Naive thymus-derived CD4-positive, alpha-beta T cell (primary cell): ENCODE measurements at regions of chr19 and their contacts with region 1.

Region 1: DNA sequence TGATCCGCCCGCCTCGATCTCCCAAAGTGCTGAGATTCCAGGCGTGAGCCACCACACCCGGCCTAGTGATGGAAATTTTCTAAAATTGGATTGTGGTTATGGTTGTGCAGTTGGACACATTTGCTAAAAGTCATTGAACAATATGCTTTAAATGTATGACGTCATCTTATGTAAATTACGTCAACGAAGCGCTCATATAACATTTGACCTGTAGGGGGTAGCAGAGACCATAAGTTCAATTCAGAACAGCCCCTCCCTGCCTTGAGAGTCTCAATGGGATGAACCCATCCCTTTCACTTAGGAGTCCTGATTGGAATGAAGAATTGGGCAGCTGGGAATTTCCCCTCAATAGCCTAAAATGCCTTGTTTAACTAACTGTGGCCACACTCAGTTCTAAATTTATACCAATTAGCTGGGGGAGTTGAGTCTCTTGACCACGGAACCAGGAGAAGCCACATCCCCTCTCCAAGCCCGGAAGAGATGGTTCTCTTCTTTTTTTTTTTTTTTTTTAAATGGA is 15.3 kb upstream of the TLE6 start:
- DNase-seq: peak in 8 of 9 donors; percentile 44 to 84 (median 74)
- ATAC-seq: peak; percentile 99
- H3K4me3 ChIP-seq: no peak overlapping the region
- H3K4me3 Mint-ChIP-seq: peak overlapping the region in 4 of 10 donors; percentile 1 to 46 (median 40)
- H3K27ac ChIP-seq: no peak overlapping the region
- H3K27ac Mint-ChIP-seq: peak overlapping the region in 7 of 9 donors; percentile 49 to 90 (median 82)
- H3K4me1 ChIP-seq: no peaks in the 10 kb centered on the region
- H3K4me1 Mint-ChIP-seq: peaks cover 0 to 6% (median 6%) of the 10 kb centered on the region in 7 donors
- H3K27me3 ChIP-seq: no peaks in the 10 kb centered on the region
- H3K27me3 Mint-ChIP-seq: peaks cover 0 to 5% (median 0%) of the 10 kb centered on the region in 5 donors

Region 2: GRCh38 chr19:2561895-2562294 is 400.2 kb before region 1 on chr19:
- CTCF ChIA-PET with region 1: no interaction called
- POLR2A ChIA-PET with region 1: no interaction called
- intact Hi-C with region 1: no loop called
- DNase-seq: peak; percentile 38 to 78 (median 71)
- ATAC-seq: peak; percentile 93
- H3K4me3 ChIP-seq: peak overlapping the region; percentile 70
- H3K4me3 Mint-ChIP-seq: peak overlapping the region; percentile 83 to 96 (median 92)
- H3K27ac ChIP-seq: peak overlapping the region; percentile 78
- H3K27ac Mint-ChIP-seq: peak overlapping the region; percentile 92 to 99 (median 98)
- H3K4me1 ChIP-seq: peaks cover 8 to 11% of the 10 kb centered on the region in 2 donors
- H3K4me1 Mint-ChIP-seq: peaks cover 12 to 56% (median 20%) of the 10 kb centered on the region in 7 donors
- H3K27me3 ChIP-seq: no peaks in the 10 kb centered on the region
- H3K27me3 Mint-ChIP-seq: no peaks in the 10 kb centered on the region

Region 3: DNA sequence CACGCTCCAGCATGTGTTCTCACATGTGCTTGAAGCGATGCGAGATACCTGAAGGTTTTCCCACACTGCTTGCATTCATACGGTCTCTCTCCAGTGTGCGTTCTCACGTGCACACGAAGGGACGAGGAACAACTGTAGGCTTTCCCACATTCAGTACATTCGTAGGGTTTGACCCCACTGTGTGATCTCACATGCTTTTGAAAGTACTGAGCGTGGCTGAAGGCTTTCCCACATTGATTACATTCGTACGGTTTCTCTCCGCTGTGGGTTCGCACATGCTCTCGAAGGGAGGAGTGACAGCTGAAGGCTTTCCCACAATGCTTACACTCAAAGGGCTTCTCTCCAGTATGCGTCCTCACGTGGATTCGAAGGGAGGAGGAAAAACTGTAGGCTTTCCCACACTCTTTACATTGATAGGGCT is 28.6 kb before region 1 on chr19:
- CTCF ChIA-PET with region 1: no interaction called
- POLR2A ChIA-PET with region 1: no interaction called
- intact Hi-C with region 1: no loop called
- DNase-seq: no peak
- ATAC-seq: no peak
- H3K4me3 ChIP-seq: no peak overlapping the region
- H3K4me3 Mint-ChIP-seq: no peak overlapping the region
- H3K27ac ChIP-seq: no peak overlapping the region
- H3K27ac Mint-ChIP-seq: peak overlapping the region in 2 of 9 donors; percentile 28 to 54
- H3K4me1 ChIP-seq: no peaks in the 10 kb centered on the region
- H3K4me1 Mint-ChIP-seq: no peaks in the 10 kb centered on the region
- H3K27me3 ChIP-seq: no peaks in the 10 kb centered on the region
- H3K27me3 Mint-ChIP-seq: no peaks in the 10 kb centered on the region

Region 4: DNA sequence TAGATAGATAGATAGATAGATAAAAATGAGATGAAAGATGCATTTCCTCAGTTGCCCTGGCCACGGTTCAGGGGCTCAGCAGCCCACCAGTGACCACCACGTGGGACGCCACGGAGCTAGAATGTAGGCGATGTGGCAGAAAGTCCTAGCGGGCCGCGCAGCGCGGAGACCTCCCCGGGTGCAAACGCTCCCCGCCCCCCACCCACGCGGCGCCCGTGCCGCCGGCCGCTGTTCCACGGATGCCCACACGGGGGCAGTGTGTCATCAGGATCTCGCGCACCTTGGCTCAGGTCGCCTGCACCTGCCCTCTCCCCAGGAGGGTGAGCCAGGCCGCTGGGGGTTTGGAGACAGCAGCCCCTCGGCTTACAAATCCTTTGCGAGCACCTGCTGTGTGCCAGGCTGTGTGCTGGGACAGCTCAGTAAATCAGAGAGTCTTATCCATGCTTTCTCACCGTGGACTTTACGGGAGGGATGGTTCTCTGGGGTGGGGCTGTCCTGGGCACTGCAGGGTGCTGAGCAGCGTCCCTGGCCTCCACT is 113.9 kb after region 1 on chr19:
- CTCF ChIA-PET with region 1: interaction called, 3 read pairs
- POLR2A ChIA-PET with region 1: interaction called, 3 read pairs
- intact Hi-C with region 1: loop called in 1 of 2 experiments (anchors 1 kb)
- DNase-seq: peak; percentile 63 to 85 (median 71)
- ATAC-seq: peak; percentile 99
- H3K4me3 ChIP-seq: no peak overlapping the region
- H3K4me3 Mint-ChIP-seq: peak overlapping the region in 4 of 10 donors; percentile 44 to 68 (median 50)
- H3K27ac ChIP-seq: no peak overlapping the region
- H3K27ac Mint-ChIP-seq: no peak overlapping the region
- H3K4me1 ChIP-seq: peaks cover 0 to 9% of the 10 kb centered on the region in 2 donors
- H3K4me1 Mint-ChIP-seq: peaks cover 0 to 10% (median 4%) of the 10 kb centered on the region in 7 donors
- H3K27me3 ChIP-seq: no peaks in the 10 kb centered on the region
- H3K27me3 Mint-ChIP-seq: peaks cover 0 to 6% (median 0%) of the 10 kb centered on the region in 5 donors

Region 5: DNA sequence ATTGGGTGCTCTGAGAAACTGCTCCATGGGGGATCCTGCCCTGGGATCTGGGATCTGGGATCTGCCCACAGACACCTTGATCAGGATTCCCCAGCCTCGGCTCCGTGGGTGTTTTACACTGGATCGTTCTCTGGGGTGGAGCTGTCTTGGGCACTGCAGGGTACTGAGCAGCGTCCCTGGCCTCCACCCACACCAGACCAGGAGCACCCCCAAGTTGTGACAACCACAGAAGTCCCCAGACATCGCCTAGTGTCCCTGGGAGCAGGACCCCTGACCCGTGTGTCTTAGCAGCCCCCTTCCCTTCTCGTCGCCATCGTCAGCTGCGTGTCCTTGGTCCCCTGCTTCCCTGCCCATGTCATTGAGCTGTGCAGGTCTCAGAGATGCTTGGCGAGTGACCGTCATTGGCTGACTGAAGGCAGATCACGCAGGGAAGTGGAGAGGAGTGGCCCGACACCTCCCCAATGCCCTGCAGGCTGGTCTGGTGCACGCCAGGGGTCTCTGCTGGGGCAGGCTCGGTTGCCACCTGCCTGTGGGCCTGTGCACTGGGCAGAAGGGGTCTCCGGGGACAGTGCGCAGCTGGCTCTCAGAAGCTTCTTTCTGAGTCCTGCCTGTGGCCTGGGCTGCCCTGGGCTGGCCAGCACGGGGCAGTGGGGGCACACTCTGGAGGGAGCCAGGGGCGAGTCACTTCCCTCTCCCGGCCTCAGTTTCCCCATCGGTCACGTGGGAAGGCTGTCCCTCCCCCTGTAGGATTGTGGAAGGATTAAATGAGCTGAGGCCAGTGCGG is 138.2 kb after region 1 on chr19:
- CTCF ChIA-PET with region 1: interaction called, 23 read pairs
- POLR2A ChIA-PET with region 1: interaction called, 5 read pairs
- intact Hi-C with region 1: loop called (anchors 1 kb)
- DNase-seq: no peak
- ATAC-seq: no peak
- H3K4me3 ChIP-seq: no peak overlapping the region
- H3K4me3 Mint-ChIP-seq: peak overlapping the region in 5 of 10 donors; percentile 17 to 97 (median 61)
- H3K27ac ChIP-seq: no peak overlapping the region
- H3K27ac Mint-ChIP-seq: no peak overlapping the region
- H3K4me1 ChIP-seq: peaks cover 18 to 45% of the 10 kb centered on the region in 2 donors
- H3K4me1 Mint-ChIP-seq: peaks cover 20 to 48% (median 30%) of the 10 kb centered on the region in 7 donors
- H3K27me3 ChIP-seq: no peaks in the 10 kb centered on the region
- H3K27me3 Mint-ChIP-seq: peaks cover 0 to 33% (median 5%) of the 10 kb centered on the region in 5 donors

Region 6: GRCh38 chr19:3108775-3109174 is 146.7 kb after region 1 on chr19:
- CTCF ChIA-PET with region 1: interaction called, 25 read pairs
- POLR2A ChIA-PET with region 1: interaction called, 5 read pairs
- intact Hi-C with region 1: loop called (anchors 1 kb)
- DNase-seq: peak in 8 of 9 donors; percentile 51 to 72 (median 65)
- ATAC-seq: peak; percentile 76
- H3K4me3 ChIP-seq: no peak overlapping the region
- H3K4me3 Mint-ChIP-seq: peak overlapping the region in 1 of 10 donors; percentile 46
- H3K27ac ChIP-seq: no peak overlapping the region
- H3K27ac Mint-ChIP-seq: peak overlapping the region in 5 of 9 donors; percentile 43 to 70 (median 57)
- H3K4me1 ChIP-seq: peaks cover 8% of the 10 kb centered on the region in 2 donors
- H3K4me1 Mint-ChIP-seq: peaks cover 4 to 15% (median 11%) of the 10 kb centered on the region in 7 donors
- H3K27me3 ChIP-seq: no peaks in the 10 kb centered on the region
- H3K27me3 Mint-ChIP-seq: peaks cover 0 to 2% (median 0%) of the 10 kb centered on the region in 5 donors

Region 7: DNA sequence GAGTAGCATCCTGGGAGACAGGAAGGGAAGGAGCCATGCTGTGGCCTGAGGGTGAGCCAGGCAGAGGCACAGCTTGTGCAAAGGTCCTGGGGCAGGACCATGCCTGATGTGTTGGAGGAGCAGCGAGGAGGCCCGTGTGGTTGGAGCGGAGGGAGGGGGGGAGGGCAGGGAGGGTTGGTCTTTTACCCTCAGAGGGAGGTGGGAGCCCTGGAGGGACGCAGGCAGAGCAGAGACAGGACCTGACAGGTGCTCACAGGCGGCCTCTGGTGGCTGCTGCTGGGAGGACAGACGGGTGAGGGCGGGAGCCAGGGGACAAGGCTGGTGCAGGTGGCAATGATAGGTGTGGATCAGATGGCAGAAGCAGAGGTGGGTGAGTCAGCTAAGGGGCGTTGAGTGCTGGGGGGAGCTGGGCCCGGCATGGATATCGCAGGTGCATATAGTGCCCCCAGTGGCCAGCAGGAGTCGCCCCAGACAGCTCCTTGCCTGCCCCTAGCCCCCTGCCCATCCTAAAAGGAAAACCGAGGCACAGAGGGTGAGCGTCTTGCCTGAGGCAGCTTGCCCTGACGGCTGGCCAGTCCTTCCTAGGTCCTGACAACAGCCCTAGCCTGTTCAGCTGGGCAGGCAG is 163.9 kb after region 1 on chr19:
- CTCF ChIA-PET with region 1: interaction called, 6 read pairs
- POLR2A ChIA-PET with region 1: no interaction called
- intact Hi-C with region 1: loop called in 1 of 2 experiments (anchors 1 kb)
- DNase-seq: peak in 8 of 9 donors; percentile 32 to 74 (median 64)
- ATAC-seq: peak; percentile 92
- H3K4me3 ChIP-seq: no peak overlapping the region
- H3K4me3 Mint-ChIP-seq: no peak overlapping the region
- H3K27ac ChIP-seq: no peak overlapping the region
- H3K27ac Mint-ChIP-seq: no peak overlapping the region
- H3K4me1 ChIP-seq: no peaks in the 10 kb centered on the region
- H3K4me1 Mint-ChIP-seq: peaks cover 0 to 21% (median 5%) of the 10 kb centered on the region in 7 donors
- H3K27me3 ChIP-seq: no peaks in the 10 kb centered on the region
- H3K27me3 Mint-ChIP-seq: peaks cover 0 to 6% (median 2%) of the 10 kb centered on the region in 5 donors

Region 8: GRCh38 chr19:3163230-3163886 is 201.3 kb after region 1 on chr19:
- CTCF ChIA-PET with region 1: interaction called, 5 read pairs
- POLR2A ChIA-PET with region 1: no interaction called
- intact Hi-C with region 1: loop called (anchors 1 to 2 kb)
- DNase-seq: peak in 8 of 9 donors; percentile 48 to 76 (median 62)
- ATAC-seq: peak; percentile 76
- H3K4me3 ChIP-seq: no peak overlapping the region
- H3K4me3 Mint-ChIP-seq: peak overlapping the region in 2 of 10 donors; percentile 35 to 38
- H3K27ac ChIP-seq: no peak overlapping the region
- H3K27ac Mint-ChIP-seq: peak overlapping the region in 6 of 9 donors; percentile 14 to 83 (median 56)
- H3K4me1 ChIP-seq: no peaks in the 10 kb centered on the region
- H3K4me1 Mint-ChIP-seq: peaks cover 12 to 48% (median 15%) of the 10 kb centered on the region in 7 donors
- H3K27me3 ChIP-seq: no peaks in the 10 kb centered on the region
- H3K27me3 Mint-ChIP-seq: no peaks in the 10 kb centered on the region

Region 9: GRCh38 chr19:3210347-3211017 is 248.4 kb after region 1 on chr19:
- CTCF ChIA-PET with region 1: interaction called, 3 read pairs
- POLR2A ChIA-PET with region 1: no interaction called
- intact Hi-C with region 1: loop called (anchors 1 kb)
- DNase-seq: peak; percentile 30 to 72 (median 58)
- ATAC-seq: peak; percentile 91
- H3K4me3 ChIP-seq: no peak overlapping the region
- H3K4me3 Mint-ChIP-seq: no peak overlapping the region
- H3K27ac ChIP-seq: no peak overlapping the region
- H3K27ac Mint-ChIP-seq: peak overlapping the region in 2 of 9 donors; percentile 25 to 55
- H3K4me1 ChIP-seq: no peaks in the 10 kb centered on the region
- H3K4me1 Mint-ChIP-seq: peaks cover 0 to 4% (median 0%) of the 10 kb centered on the region in 7 donors
- H3K27me3 ChIP-seq: no peaks in the 10 kb centered on the region
- H3K27me3 Mint-ChIP-seq: no peaks in the 10 kb centered on the region